ENCODE measurements at regions of chr5 and their contacts with region 1.

Region 1: DNA sequence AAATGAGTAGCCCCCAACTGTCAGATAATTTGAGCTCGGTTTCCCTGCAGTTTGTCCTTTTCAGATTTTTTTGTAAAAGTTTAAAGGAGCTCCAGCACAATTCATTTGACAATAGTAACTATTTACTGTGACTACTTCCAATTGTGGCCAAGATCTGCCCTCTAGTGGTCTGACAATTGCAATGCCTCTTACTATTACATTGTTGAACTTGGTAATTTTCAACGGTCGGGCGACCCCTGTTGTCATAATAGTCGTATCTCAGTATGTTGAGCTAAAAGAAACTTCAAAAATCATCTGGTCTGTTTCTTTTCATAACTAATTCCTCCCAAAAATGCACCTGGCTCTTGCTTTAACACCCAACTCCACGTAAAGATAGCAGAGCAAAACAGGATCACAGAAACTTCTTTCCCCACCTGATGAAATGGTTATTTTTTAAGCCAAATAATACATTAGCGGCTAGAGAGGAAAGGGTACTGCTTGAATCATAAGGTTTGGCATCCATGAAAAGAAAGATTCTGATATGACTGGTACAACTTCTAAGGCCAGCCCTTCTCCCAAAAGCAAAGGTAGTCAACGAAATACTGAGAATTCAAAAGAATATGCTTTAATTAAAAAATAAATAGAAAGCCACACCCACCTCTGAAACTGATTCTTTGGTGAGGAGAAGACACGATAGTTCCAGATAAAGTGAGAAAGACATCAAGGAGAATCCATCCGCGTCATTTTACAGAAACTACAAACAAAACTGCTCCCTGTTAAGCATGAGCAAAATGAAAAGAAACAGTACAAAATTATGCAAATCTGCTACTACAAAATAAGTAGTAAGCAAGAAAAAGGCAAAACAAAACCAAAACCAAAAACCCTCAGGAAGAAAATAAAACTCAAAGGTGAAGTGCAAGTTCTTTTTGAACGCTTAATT is 76.9 kb upstream of the HTR4 start:
- DNase-seq: peak in 9 of 10 donors; percentile 27 to 90 (median 65)
- H3K4me3 ChIP-seq: peak overlapping the region in 16 of 59 donors; percentile 2 to 35 (median 16)
- H3K27ac ChIP-seq: peak overlapping the region in 2 of 59 donors; percentile 0 to 34
- H3K27me3 ChIP-seq: peaks cover 0 to 4% (median 0%) of the 10 kb centered on the region in 45 donors
- CTCF ChIP-seq: peak in 55 of 56 donors; percentile 93 to 100 (median 99)

Region 2: GRCh38 chr5:148179234-148179824 is 551.9 kb before region 1 on chr5:
- intact Hi-C with region 1: loop called in 1 of 2 experiments (anchors 5 kb)
- DNase-seq: no peak
- H3K4me3 ChIP-seq: no peak overlapping the region
- H3K27ac ChIP-seq: no peak overlapping the region
- H3K27me3 ChIP-seq: no peaks in the 10 kb centered on the region
- CTCF ChIP-seq: peak; percentile 34 to 86 (median 72)

Region 3: DNA sequence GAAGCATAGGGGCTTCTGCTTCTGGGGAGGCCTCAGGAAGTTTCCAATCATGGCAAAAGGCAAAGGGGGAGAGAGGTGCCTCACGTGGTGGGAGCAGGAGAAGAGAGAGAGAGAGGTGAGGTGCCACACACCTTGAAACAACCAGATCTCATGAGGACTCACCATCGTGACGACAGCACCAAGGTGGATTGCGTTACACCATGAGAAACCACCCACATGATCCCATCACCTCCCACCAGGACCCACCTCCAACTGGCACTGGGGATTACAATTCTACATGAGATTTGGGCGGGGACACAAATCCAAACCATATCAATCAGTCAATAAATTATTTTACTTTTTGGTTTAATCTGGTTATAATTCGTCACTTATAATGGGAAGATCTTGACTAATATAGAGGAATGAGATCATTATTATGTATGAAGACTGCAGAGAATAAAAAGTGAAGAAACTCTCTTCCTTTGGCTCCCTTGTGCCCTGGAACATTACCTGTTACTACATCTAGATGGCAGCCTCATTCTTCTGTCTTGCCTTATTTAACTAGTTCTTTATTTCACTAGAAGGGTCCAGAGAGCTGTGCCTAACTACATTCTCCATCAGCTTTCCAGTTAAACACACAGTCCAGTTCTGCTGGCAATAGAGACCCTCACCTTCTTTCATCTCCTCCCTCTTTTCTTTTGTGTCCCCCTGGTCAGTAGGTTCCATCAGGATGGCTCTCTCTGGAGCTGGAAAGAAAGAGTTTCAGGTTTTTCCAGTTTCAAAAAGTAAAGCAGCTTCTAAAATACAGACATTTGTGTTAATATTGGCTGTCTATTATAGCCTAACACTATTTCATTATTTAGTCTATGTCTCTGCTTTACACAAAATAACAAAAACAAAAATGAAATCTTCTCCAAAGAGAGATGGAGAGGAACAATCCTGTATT is 440.7 kb before region 1 on chr5:
- intact Hi-C with region 1: loop called in 1 of 2 experiments (anchors 5 kb)
- DNase-seq: no peak
- H3K4me3 ChIP-seq: peak overlapping the region in 8 of 59 donors; percentile 2 to 33 (median 10)
- H3K27ac ChIP-seq: peak overlapping the region in 33 of 59 donors; percentile 0 to 80 (median 41)
- H3K27me3 ChIP-seq: no peaks in the 10 kb centered on the region
- CTCF ChIP-seq: peak in 55 of 56 donors; percentile 15 to 72 (median 49)

Region 4: GRCh38 chr5:148443998-148444397 is 287.2 kb before region 1 on chr5:
- intact Hi-C with region 1: loop called (anchors 2 kb)
- DNase-seq: peak in 3 of 10 donors; percentile 26 to 56 (median 42)
- H3K4me3 ChIP-seq: no peak overlapping the region
- H3K27ac ChIP-seq: no peak overlapping the region
- H3K27me3 ChIP-seq: no peaks in the 10 kb centered on the region
- CTCF ChIP-seq: peak; percentile 74 to 96 (median 87)

Region 5: DNA sequence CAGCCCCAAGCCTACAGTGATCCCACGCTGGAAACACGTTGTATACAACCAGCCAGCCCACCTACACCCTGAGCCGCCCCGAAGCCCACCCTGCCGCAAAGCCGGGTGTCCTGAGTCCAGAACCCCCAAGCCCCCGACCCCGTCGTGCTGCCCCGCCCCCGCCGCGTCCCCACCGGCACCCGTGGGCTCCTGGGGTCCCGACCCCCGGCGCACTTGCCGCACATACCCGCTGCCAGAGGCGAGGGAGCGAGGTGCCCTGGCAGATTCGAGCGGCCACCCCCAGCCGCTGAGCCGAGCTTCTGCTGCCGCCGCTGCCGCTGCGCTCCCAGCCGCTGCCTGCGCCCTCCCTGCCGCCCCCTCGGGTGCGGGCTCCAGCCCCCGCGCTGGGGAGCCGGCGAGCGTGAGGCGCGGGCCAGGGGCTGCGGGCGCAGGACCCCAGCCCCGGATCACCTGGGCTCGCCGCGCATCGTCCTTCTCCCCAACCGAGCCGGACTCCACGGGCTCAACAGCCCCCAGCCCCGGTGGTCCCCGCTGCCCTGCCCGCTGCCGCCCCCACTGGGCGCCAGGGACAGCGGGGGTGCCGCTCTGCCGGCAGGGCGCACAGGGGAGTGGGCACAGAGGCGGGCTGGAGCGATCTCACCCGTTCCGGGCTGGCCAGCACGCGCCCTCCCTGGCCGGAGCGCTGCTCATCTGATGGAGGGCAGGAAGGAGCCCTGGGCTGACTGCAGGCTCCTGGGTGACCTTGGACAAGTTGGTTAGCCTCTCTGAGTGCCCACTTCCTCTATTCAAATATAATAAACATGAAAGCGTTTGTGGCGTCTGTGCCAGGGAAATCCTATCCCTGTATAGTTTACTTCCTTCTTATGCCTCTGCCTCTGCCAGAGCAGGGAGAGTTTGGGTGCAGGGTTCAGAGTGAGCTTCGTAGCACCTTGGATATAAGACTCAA is 77.1 kb before region 1 on chr5 and contains the start of gene HTR4:
- intact Hi-C with region 1: no loop called
- DNase-seq: no peak
- H3K4me3 ChIP-seq: peak within 1 kb of the TSS; percentile 8 to 67 (median 47)
- H3K27ac ChIP-seq: peak within 1 kb of the TSS in 30 of 59 donors; percentile 3 to 84 (median 54)
- H3K27me3 ChIP-seq: peaks cover 0 to 47% (median 19%) of the 10 kb centered on the region in 45 donors
- CTCF ChIP-seq: no peak
- total RNA-seq, gene HTR4: 2.8 to 15.3 (median 8.5) TPM

Region 6: GRCh38 chr5:148805326-148806290 is 74.4 kb after region 1 on chr5:
- intact Hi-C with region 1: no loop called
- DNase-seq: peak in 1 of 10 donors; percentile 31
- H3K4me3 ChIP-seq: no peak overlapping the region
- H3K27ac ChIP-seq: no peak overlapping the region
- H3K27me3 ChIP-seq: no peaks in the 10 kb centered on the region
- CTCF ChIP-seq: no peak

Region 7: DNA sequence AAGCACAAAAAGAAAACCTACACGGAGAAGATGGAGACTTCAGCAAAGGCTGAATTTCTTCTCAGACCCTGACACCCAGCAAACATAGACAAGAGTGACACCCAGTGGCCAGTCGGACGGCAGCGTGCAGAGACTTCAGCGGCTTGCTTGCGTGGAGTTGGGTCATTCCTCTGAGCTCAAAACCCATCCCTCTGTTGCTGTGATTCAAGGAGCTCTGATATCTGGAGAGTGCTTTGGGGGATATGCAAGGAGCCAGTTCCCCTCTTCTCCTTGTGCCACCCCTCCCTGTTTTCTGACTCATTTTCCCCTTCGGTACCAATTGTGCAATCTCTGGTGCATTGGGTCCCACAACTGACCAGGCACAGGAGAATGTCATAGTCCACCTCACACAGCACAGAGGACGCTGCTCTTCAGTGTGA is 304.2 kb after region 1 on chr5:
- intact Hi-C with region 1: loop called (anchors 2 to 5 kb)
- DNase-seq: peak; percentile 72 to 88 (median 82)
- H3K4me3 ChIP-seq: no peak overlapping the region
- H3K27ac ChIP-seq: peak overlapping the region in 25 of 59 donors; percentile 1 to 82 (median 24)
- H3K27me3 ChIP-seq: no peaks in the 10 kb centered on the region
- CTCF ChIP-seq: peak; percentile 60 to 95 (median 89)

Region 8: GRCh38 chr5:149114403-149115312 is 383.5 kb after region 1 on chr5:
- intact Hi-C with region 1: loop called (anchors 2 to 5 kb)
- DNase-seq: peak in 9 of 10 donors; percentile 56 to 83 (median 64)
- H3K4me3 ChIP-seq: no peak overlapping the region
- H3K27ac ChIP-seq: peak overlapping the region in 34 of 59 donors; percentile 8 to 75 (median 54)
- H3K27me3 ChIP-seq: no peaks in the 10 kb centered on the region
- CTCF ChIP-seq: peak in 55 of 56 donors; percentile 54 to 93 (median 80)

Measured in dorsolateral prefrontal cortex (tissue), 120 donors.